PC-9 (cell line): ENCODE measurements at regions of chr16 and their contacts with region 1.

Region 1: GRCh38 chr16:13300066-13300840 is 398.9 kb downstream of the SHISA9 start:
- DNase-seq: no peak
- H3K4me3 ChIP-seq: no peak overlapping the region
- H3K27ac ChIP-seq: no peak overlapping the region
- H3K4me1 ChIP-seq: peaks cover 10% of the 10 kb centered on the region
- H3K27me3 ChIP-seq: no peaks in the 10 kb centered on the region
- CTCF ChIP-seq: no peak

Region 2: DNA sequence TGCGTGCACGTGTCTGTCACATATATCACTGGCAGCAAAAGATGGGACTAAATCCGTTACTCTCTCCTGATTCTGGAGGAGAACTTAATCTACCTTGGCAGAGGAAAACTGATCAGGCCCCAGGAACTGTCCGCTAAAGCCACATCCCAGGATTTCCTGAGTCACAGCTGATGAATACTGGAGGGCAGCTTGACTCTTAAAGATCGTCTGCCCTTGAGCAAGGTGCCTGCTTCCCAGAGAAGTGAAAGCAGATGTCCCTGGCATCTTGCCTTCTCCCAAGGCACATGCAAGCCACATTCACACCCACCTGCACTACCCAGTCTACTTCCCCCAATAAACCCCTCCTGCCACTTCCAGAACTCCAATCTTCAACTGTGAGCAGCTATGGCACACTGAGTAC is 596.3 kb before region 1 on chr16:
- CTCF ChIA-PET with region 1: interaction called, 11 read pairs
- POLR2A ChIA-PET with region 1: no interaction called
- intact Hi-C with region 1: no loop called
- DNase-seq: no peak
- H3K4me3 ChIP-seq: no peak overlapping the region
- H3K27ac ChIP-seq: no peak overlapping the region
- H3K4me1 ChIP-seq: no peaks in the 10 kb centered on the region
- H3K27me3 ChIP-seq: no peaks in the 10 kb centered on the region
- CTCF ChIP-seq: no peak

Region 3: DNA sequence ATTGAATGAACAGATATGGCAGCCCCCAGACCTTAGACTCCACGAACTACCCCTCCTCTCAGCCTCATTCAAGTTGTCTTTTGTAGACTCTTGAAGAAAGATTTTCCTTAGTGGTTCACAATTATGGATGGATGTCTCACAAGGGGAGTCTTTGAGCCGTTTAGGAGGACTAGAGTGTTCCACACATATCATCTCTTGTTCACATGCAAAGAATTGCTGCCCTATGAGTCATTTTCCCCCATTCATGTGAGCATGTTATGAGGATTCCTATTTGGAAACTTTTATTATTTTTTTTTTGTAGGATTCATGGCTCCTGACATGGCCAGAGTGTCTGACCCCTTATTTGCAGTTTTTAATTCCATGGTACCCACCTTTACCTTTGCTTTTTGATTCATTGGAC is 161.7 kb before region 1 on chr16:
- CTCF ChIA-PET with region 1: no interaction called
- POLR2A ChIA-PET with region 1: no interaction called
- intact Hi-C with region 1: no loop called
- DNase-seq: no peak
- H3K4me3 ChIP-seq: no peak overlapping the region
- H3K27ac ChIP-seq: no peak overlapping the region
- H3K4me1 ChIP-seq: no peaks in the 10 kb centered on the region
- H3K27me3 ChIP-seq: no peaks in the 10 kb centered on the region
- CTCF ChIP-seq: no peak